Activated CD4-positive, alpha-beta T cell treated with anti-CD3 and anti-CD28 coated beads, Interleukin-2, amount 10 ng/mL, durations not matched to agents 24 days and 14 days (primary cell): ENCODE measurements at regions of chr19 and their contacts with region 1.

Region 1: GRCh38 chr19:3154957-3155736 is 19.3 kb downstream of the GNA15 start:
- DNase-seq: peak; percentile 95
- H3K4me3 Mint-ChIP-seq: no peak overlapping the region
- H3K27ac Mint-ChIP-seq: no peak overlapping the region
- H3K4me1 Mint-ChIP-seq: peaks cover 9% of the 10 kb centered on the region
- H3K27me3 Mint-ChIP-seq: no peaks in the 10 kb centered on the region

Region 2: DNA sequence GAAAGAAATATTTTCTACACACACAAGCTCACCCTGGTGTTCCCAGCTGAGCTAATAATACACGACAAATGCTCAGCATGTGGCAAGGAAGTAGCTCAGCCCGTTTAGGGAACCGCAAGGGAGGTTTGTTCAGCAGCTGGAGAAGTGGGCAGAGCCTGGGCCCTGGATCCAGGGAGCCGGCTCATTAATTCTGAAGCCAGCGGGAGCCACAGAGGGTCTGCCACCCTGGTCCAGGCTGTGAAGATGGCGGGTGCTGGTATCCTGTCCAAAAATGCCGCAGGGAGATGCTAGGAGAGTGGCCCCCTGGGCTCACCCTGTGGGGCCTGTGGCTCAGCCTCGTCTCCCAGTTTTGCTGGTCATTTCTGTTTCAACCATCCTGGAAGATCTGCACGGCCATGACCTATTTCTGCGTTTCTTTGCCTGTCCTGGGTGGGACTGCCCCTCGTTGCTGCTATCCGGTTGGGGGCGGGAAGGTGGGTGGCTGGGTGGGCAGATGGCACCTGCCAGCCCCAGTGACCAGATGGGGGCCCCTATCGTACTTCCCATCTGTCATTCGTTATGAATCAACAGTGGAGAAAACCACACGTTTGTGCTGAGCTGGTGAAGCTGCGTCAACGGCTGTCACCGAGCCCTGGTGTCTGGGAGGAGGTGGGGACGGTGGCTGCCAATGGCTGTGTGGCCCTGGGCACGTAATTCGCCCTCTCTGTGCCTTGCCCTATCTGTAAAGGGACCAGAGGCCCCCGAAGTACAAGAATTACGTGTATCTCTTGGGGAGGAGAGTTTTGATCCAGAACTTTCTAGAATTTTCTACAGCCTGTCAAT is 22.0 kb before region 1 on chr19:
- intact Hi-C with region 1: loop called (anchors 1 kb)
- DNase-seq: peak; percentile 94
- H3K4me3 Mint-ChIP-seq: peak overlapping the region; percentile 68
- H3K27ac Mint-ChIP-seq: peak overlapping the region; percentile 92
- H3K4me1 Mint-ChIP-seq: peaks cover 38% of the 10 kb centered on the region
- H3K27me3 Mint-ChIP-seq: peaks cover 2% of the 10 kb centered on the region

Region 3: DNA sequence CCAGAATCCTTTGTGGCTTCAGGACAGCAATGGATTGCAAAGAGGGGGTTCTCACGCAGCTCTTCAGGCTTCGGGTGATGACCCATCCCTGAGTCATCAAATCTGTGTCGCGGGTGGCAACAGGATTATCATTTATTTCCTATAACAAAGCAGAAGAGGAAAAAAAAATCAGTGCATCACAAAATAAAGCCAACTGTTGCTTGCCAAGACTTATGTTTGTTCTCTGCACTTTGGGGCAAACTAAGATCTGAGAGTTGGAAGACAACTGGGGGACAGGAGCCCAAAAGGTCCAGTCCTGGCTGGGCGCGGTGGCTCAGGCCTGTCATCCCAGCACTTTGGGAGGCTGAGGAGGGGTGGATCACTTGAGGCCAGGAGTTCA is 12.9 kb before region 1 on chr19:
- intact Hi-C with region 1: loop called (anchors 1 kb)
- DNase-seq: no peak
- H3K4me3 Mint-ChIP-seq: peak overlapping the region; percentile 68
- H3K27ac Mint-ChIP-seq: peak overlapping the region; percentile 86
- H3K4me1 Mint-ChIP-seq: peaks cover 43% of the 10 kb centered on the region
- H3K27me3 Mint-ChIP-seq: no peaks in the 10 kb centered on the region

Region 4: GRCh38 chr19:3178377-3178972 is 23.3 kb after region 1 on chr19 and contains the start of gene S1PR4:
- intact Hi-C with region 1: loop called (anchors 2 kb)
- DNase-seq: peak; percentile 91
- H3K4me3 Mint-ChIP-seq: peak within 1 kb of the TSS; percentile 100
- H3K27ac Mint-ChIP-seq: peak within 1 kb of the TSS; percentile 97
- H3K4me1 Mint-ChIP-seq: peaks cover 26% of the 10 kb centered on the region
- H3K27me3 Mint-ChIP-seq: no peaks in the 10 kb centered on the region
- total RNA-seq, gene S1PR4: 41.8 and 43.7 TPM in 2 replicates

Region 5: DNA sequence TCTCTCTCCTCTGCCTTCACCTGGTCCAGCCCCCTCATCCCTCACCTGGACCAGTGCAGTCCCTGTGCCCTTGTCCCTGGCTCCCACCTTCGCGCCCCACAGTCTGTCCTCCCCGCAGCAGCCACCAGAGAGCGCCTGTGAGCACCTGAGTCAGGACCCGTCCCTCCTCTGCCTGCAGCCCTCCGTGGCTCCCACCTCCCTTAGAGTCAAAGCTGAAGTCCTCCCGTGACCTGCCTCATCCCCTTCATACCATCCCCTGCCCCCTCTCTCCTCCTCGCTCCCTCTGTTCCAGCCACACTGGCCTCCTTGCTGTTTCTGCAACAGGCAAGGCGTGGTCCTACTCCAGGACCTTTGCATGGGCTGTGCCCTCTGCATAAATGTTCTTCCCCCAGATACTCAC is 79.7 kb after region 1 on chr19:
- intact Hi-C with region 1: no loop called
- DNase-seq: peak; percentile 69
- H3K4me3 Mint-ChIP-seq: no peak overlapping the region
- H3K27ac Mint-ChIP-seq: no peak overlapping the region
- H3K4me1 Mint-ChIP-seq: no peaks in the 10 kb centered on the region
- H3K27me3 Mint-ChIP-seq: no peaks in the 10 kb centered on the region